Activated B cell treated with CpG ODN at 0.5 μM for 24 hours (primary cell): ENCODE measurements at regions of chr9 and their contacts with region 1.

Region 1: GRCh38 chr9:21831961-21832509 is 29.6 kb downstream of the MTAP start:
- DNase-seq: no peak
- ATAC-seq: peak; percentile 54
- H3K4me3 Mint-ChIP-seq: peak overlapping the region; percentile 40
- H3K27ac Mint-ChIP-seq: peak overlapping the region; percentile 86
- H3K4me1 Mint-ChIP-seq: peaks cover 59% of the 10 kb centered on the region
- H3K27me3 Mint-ChIP-seq: no peaks in the 10 kb centered on the region
- CTCF ChIP-seq: no peak

Region 2: GRCh38 chr9:21802195-21803000 is 29.6 kb before region 1 on chr9 and contains the start of gene MTAP:
- CTCF ChIA-PET with region 1: no interaction called
- POLR2A ChIA-PET with region 1: interaction called, 7 read pairs
- intact Hi-C with region 1: loop called (anchors 1 kb)
- DNase-seq: peak; percentile 68
- ATAC-seq: peak; percentile 88
- H3K4me3 Mint-ChIP-seq: peak within 1 kb of the TSS; percentile 99
- H3K27ac Mint-ChIP-seq: peak within 1 kb of the TSS; percentile 91
- H3K4me1 Mint-ChIP-seq: peaks cover 53% of the 10 kb centered on the region
- H3K27me3 Mint-ChIP-seq: peaks cover 15% of the 10 kb centered on the region
- CTCF ChIP-seq: no peak
- total RNA-seq, gene MTAP: 30.4 and 43.2 TPM in 2 replicates

Region 3: DNA sequence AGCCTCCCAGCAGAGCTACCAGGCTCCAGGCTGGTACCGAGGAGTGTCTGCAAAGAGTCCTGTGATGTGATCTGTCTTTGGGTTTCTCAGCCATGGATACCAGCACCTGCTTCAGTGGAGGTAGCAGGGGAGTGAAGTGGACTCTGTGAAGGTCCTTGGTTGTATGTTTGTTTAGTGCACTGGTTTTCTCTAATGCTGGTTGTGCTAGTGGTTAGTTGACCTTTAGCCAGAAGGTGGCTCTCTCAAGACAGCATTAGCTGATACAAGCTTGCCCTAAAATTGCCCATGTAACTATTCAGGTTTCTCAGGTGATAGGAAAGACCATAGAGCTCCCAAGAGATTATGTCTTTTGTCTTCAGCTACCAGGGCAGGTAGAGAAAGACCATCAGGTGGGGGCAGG is 57.6 kb after region 1 on chr9:
- CTCF ChIA-PET with region 1: no interaction called
- POLR2A ChIA-PET with region 1: no interaction called
- intact Hi-C with region 1: loop called (anchors 10 kb)
- DNase-seq: no peak
- ATAC-seq: no peak
- H3K4me3 Mint-ChIP-seq: no peak overlapping the region
- H3K27ac Mint-ChIP-seq: no peak overlapping the region
- H3K4me1 Mint-ChIP-seq: no peaks in the 10 kb centered on the region
- H3K27me3 Mint-ChIP-seq: no peaks in the 10 kb centered on the region
- CTCF ChIP-seq: no peak

Region 4: GRCh38 chr9:21965401-21965951 is 133.4 kb after region 1 on chr9:
- CTCF ChIA-PET with region 1: no interaction called
- POLR2A ChIA-PET with region 1: no interaction called
- intact Hi-C with region 1: loop called (anchors 1 kb)
- DNase-seq: peak; percentile 41
- ATAC-seq: peak; percentile 67
- H3K4me3 Mint-ChIP-seq: peak overlapping the region; percentile 77
- H3K27ac Mint-ChIP-seq: peak overlapping the region; percentile 64
- H3K4me1 Mint-ChIP-seq: peaks cover 19% of the 10 kb centered on the region
- H3K27me3 Mint-ChIP-seq: peaks cover 74% of the 10 kb centered on the region
- CTCF ChIP-seq: no peak